Left cardiac atrium (tissue), 4 donors: ENCODE measurements at regions of chr1 and their contacts with region 1.

Region 1: DNA sequence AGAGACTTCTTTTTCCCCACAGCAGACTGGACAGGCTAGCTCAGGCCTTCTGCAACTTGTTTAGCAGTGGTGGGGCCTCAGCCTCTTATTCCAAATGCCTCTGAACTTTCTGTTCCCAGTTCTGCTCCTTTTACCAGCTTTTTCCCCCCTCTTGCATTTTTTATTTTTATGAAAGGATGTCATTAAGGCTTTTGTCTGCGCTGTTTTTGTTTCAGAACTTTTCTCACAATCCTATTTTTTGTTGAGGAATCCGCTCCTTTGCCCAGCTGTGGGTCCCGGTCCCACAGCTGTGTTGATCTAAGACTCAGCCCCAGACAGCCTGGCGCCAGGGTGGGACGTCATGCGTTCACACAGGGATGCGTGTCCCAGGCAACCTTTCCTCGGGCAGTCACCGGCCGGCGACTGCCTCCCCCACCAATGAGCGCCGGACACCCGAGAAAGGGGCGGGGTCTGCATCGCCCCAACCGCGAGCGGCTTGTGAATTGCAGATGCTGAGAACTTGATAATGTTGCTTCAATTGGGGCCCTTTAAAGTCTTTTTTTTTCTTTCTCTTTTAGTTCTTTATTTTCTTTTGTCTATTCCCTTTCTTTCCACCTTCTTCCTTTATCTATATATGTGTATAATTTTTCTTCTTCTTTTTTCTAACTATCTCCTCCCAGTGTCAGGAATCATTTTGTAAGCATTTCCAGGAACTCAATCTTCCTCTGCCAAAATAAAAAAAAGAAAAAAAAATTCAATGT is 3.0 kb upstream of the ID3 start:
- DNase-seq: peak; percentile 99
- ATAC-seq: peak; percentile 82 to 84

Region 2: GRCh38 chr1:23444104-23444533 is 118.2 kb before region 1 on chr1:
- intact Hi-C with region 1: no loop called
- DNase-seq: peak; percentile 76
- ATAC-seq: peak; percentile 92 to 97

Region 3: GRCh38 chr1:23691499-23692307 is 129.4 kb after region 1 on chr1 and contains the start of gene RPL11:
- intact Hi-C with region 1: loop called in 1 of 2 experiments (anchors 5 kb)
- DNase-seq: peak; percentile 95
- ATAC-seq: peak; percentile 99 to 100
- total RNA-seq, gene RPL11: 639 to 683 TPM